ENCODE measurements at regions of chr11 and their contacts with region 1.

Region 1: GRCh38 chr11:6603287-6604080 is at the starts of genes ILK and RRP8:
- DNase-seq: peak; percentile 91
- ATAC-seq: peak; percentile 92
- H3K4me3 ChIP-seq: peak within 1 kb of the TSS; percentile 77 to 96 (median 93)
- H3K4me3 Mint-ChIP-seq: no peak within 1 kb of the TSS
- H3K27ac ChIP-seq: peak within 1 kb of the TSS; percentile 70 to 89
- H3K27ac Mint-ChIP-seq: no peak within 1 kb of the TSS
- H3K4me1 ChIP-seq: peaks cover 51 to 56% of the 10 kb centered on the region in 2 donors
- H3K4me1 Mint-ChIP-seq: peaks cover 42% of the 10 kb centered on the region
- H3K27me3 ChIP-seq: no peaks in the 10 kb centered on the region
- H3K27me3 Mint-ChIP-seq: no peaks in the 10 kb centered on the region
- CTCF ChIP-seq: peak; percentile 8
- total RNA-seq, gene ILK: 119 and 131 TPM in 2 replicates
- total RNA-seq, gene RRP8: 29.4 and 29.5 TPM in 2 replicates

Region 2: DNA sequence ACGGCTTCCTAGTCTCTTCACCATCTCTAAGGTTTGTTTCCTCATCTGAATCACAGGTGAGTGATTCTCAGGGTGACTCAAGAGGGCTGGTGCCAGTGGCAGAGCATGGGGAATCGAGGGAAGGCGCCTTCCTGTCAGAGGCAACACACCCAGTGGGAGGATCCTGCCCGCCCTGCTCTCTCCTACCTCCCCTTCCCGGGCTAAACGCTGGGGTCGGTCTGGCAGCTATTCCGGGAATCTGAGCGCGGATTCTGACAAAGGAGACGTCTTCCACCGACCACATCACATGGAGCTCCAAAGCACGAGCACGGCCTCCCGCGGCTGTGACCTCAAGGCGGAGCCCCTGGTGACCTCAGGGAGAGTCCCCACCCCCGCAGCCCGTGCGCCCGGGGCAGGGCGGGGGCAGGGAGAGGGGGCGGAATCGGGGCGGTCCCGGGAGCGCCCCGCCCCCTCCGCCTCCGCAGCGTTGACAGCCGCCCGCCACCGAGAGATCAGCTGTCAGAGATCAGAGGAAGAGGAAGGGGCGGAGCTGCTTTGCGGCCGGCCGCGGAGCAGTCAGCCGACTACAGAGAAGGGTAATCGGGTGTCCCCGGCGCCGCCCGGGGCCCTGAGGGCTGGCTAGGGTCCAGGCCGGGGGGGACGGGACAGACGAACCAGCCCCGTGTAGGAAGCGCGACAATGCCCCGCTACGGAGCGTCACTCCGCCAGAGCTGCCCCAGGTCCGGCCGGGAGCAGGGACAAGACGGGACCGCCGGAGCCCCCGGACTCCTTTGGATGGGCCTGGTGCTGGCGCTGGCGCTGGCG is 213.4 kb before region 1 on chr11 and contains the start of gene SMPD1:
- CTCF ChIA-PET with region 1: interaction called, 4 read pairs
- POLR2A ChIA-PET with region 1: no interaction called
- intact Hi-C with region 1: loop called (anchors 1 kb)
- DNase-seq: peak; percentile 96
- ATAC-seq: peak; percentile 94
- H3K4me3 ChIP-seq: peak within 1 kb of the TSS; percentile 70 to 93 (median 85)
- H3K4me3 Mint-ChIP-seq: peak within 1 kb of the TSS; percentile 97
- H3K27ac ChIP-seq: peak within 1 kb of the TSS; percentile 98
- H3K27ac Mint-ChIP-seq: peak within 1 kb of the TSS; percentile 98
- H3K4me1 ChIP-seq: peaks cover 18 to 32% of the 10 kb centered on the region in 2 donors
- H3K4me1 Mint-ChIP-seq: peaks cover 32% of the 10 kb centered on the region
- H3K27me3 ChIP-seq: no peaks in the 10 kb centered on the region
- H3K27me3 Mint-ChIP-seq: no peaks in the 10 kb centered on the region
- CTCF ChIP-seq: no peak
- total RNA-seq, gene SMPD1: 18.3 TPM in 2 replicates

Region 3: GRCh38 chr11:6481012-6481923 is 122.2 kb before region 1 on chr11 and contains the starts of genes ARFIP2 and TIMM10B:
- CTCF ChIA-PET with region 1: no interaction called
- POLR2A ChIA-PET with region 1: no interaction called
- intact Hi-C with region 1: loop called (anchors 1 kb)
- DNase-seq: peak; percentile 98
- ATAC-seq: peak; percentile 96
- H3K4me3 ChIP-seq: peak within 1 kb of the TSS; percentile 26 to 92 (median 83)
- H3K4me3 Mint-ChIP-seq: peak within 1 kb of the TSS; percentile 97
- H3K27ac ChIP-seq: peak within 1 kb of the TSS; percentile 90 to 96
- H3K27ac Mint-ChIP-seq: peak within 1 kb of the TSS; percentile 97
- H3K4me1 ChIP-seq: peaks cover 20 to 27% of the 10 kb centered on the region in 2 donors
- H3K4me1 Mint-ChIP-seq: peaks cover 39% of the 10 kb centered on the region
- H3K27me3 ChIP-seq: no peaks in the 10 kb centered on the region
- H3K27me3 Mint-ChIP-seq: no peaks in the 10 kb centered on the region
- CTCF ChIP-seq: no peak
- total RNA-seq, gene ARFIP2: 46.8 and 47.5 TPM in 2 replicates
- total RNA-seq, gene TIMM10B: 62.1 and 63.7 TPM in 2 replicates

Region 4: DNA sequence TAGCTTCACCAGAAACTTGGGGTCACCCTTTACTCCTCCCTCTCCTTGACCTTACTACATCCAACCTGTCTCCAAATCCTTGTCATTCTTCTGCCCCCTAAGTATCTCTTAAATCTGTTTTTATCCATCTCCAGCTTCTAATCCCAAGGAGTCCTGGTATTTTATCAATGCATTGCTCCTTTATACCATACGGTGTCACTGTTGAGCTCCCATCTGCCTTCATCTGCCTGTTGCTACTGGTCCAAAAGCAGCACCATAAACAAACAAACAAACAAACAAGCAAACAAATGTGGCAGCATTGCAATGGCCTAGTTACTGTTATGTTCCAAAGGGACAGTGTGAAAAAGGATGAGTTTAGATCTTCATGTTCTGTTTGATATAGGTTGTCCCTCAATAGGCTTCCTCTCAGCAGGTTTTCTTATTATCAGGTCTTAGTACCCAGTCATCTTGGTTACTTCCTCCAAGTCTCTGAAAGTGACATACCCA is 72.2 kb before region 1 on chr11:
- CTCF ChIA-PET with region 1: interaction called, 8 read pairs
- POLR2A ChIA-PET with region 1: interaction called, 3 read pairs
- intact Hi-C with region 1: loop called (anchors 5 kb)
- DNase-seq: peak; percentile 66
- ATAC-seq: peak; percentile 57
- H3K4me3 ChIP-seq: no peak overlapping the region
- H3K4me3 Mint-ChIP-seq: no peak overlapping the region
- H3K27ac ChIP-seq: no peak overlapping the region
- H3K27ac Mint-ChIP-seq: no peak overlapping the region
- H3K4me1 ChIP-seq: peaks cover 4 to 5% of the 10 kb centered on the region in 2 donors
- H3K4me1 Mint-ChIP-seq: peaks cover 5% of the 10 kb centered on the region
- H3K27me3 ChIP-seq: no peaks in the 10 kb centered on the region
- H3K27me3 Mint-ChIP-seq: no peaks in the 10 kb centered on the region
- CTCF ChIP-seq: peak; percentile 83

Region 5: GRCh38 chr11:6619004-6619745 is 15.7 kb after region 1 on chr11 and contains the start of gene TPP1:
- CTCF ChIA-PET with region 1: interaction called, 28 read pairs
- POLR2A ChIA-PET with region 1: interaction called, 38 read pairs
- intact Hi-C with region 1: loop called (anchors 1 kb)
- DNase-seq: peak; percentile 97
- ATAC-seq: peak; percentile 92
- H3K4me3 ChIP-seq: peak within 1 kb of the TSS; percentile 82 to 100 (median 96)
- H3K4me3 Mint-ChIP-seq: no peak within 1 kb of the TSS
- H3K27ac ChIP-seq: peak within 1 kb of the TSS; percentile 94 to 97
- H3K27ac Mint-ChIP-seq: no peak within 1 kb of the TSS
- H3K4me1 ChIP-seq: peaks cover 19 to 33% of the 10 kb centered on the region in 2 donors
- H3K4me1 Mint-ChIP-seq: peaks cover 11% of the 10 kb centered on the region
- H3K27me3 ChIP-seq: no peaks in the 10 kb centered on the region
- H3K27me3 Mint-ChIP-seq: no peaks in the 10 kb centered on the region
- CTCF ChIP-seq: no peak
- total RNA-seq, gene TPP1: 191 and 200 TPM in 2 replicates

Region 6: GRCh38 chr11:6746086-6746618 is 142.7 kb after region 1 on chr11:
- CTCF ChIA-PET with region 1: no interaction called
- POLR2A ChIA-PET with region 1: interaction called, 3 read pairs
- intact Hi-C with region 1: loop called (anchors 2 kb)
- DNase-seq: peak; percentile 74
- ATAC-seq: peak; percentile 84
- H3K4me3 ChIP-seq: peak overlapping the region; percentile 54 to 95 (median 80)
- H3K4me3 Mint-ChIP-seq: no peak overlapping the region
- H3K27ac ChIP-seq: peak overlapping the region; percentile 83 to 95
- H3K27ac Mint-ChIP-seq: no peak overlapping the region
- H3K4me1 ChIP-seq: peaks cover 49 to 58% of the 10 kb centered on the region in 2 donors
- H3K4me1 Mint-ChIP-seq: peaks cover 25% of the 10 kb centered on the region
- H3K27me3 ChIP-seq: no peaks in the 10 kb centered on the region
- H3K27me3 Mint-ChIP-seq: no peaks in the 10 kb centered on the region
- CTCF ChIP-seq: no peak

Measured in B cell (primary cell).